Panc1 (cell line): ENCODE measurements at regions of chr10 and their contacts with region 1.

Region 1: GRCh38 chr10:103040418-103040817 is 122.3 kb downstream of the CNNM2 start:
- DNase-seq: no peak
- ATAC-seq: peak; percentile 46; the same call in 1 of the 2 replicates
- H3K4me3 ChIP-seq: no peak overlapping the region
- H3K27ac ChIP-seq: no peak overlapping the region
- H3K4me1 ChIP-seq: no peaks in the 10 kb centered on the region
- H3K27me3 ChIP-seq: no peaks in the 10 kb centered on the region
- CTCF ChIP-seq: no peak

Region 2: DNA sequence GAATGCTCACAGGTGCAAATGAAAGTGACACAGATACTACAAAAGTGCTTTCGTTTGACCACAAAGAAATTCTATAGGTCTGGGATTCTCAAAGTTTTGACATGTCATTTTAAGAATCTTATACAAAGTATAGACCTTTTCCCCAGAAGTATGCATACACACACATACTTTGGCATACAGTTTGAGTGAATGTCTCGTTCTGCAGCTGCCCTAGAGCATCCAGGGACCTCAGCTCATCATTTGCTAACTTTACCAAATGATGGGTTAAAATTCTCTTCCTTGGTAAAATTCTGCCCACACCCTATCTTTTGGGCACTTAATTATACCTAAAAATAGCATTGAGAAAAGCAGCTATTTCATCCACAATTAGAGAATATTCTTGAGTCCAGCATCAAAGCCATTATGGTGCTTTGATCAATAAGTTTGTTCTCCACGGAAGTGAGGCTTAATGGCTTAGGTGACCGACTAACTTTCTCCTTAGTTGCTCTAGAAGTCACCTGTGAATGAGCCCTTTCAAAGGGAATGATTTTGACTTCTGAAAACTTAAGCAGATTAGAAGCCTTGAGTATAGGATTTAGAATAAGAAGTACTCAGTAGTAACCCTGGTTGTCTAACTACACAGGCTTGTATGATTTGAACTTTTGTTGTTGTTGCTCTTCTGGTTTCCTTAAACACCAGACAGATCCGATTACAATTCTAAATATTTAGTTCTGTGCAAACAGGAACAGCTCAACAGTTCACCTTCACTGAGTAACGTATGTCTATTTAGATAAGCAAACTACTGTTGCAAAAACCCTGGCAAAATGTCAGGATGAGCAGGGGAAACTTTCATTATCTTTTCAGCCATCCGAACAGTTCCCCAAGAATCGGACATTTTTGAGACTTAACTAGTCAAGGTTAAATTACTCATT is 51.8 kb before region 1 on chr10:
- CTCF ChIA-PET with region 1: no interaction called
- POLR2A ChIA-PET with region 1: no interaction called
- in situ Hi-C with region 1: no loop called
- intact Hi-C with region 1: no loop called
- DNase-seq: no peak
- ATAC-seq: peak; percentile 58; the same call in 1 of the 2 replicates
- H3K4me3 ChIP-seq: no peak overlapping the region
- H3K27ac ChIP-seq: peak overlapping the region; percentile 32; the same call in 1 of the 2 replicates
- H3K4me1 ChIP-seq: peaks cover 9% of the 10 kb centered on the region
- H3K27me3 ChIP-seq: no peaks in the 10 kb centered on the region
- CTCF ChIP-seq: no peak

Region 3: GRCh38 chr10:103013416-103013815 is 27.0 kb before region 1 on chr10:
- CTCF ChIA-PET with region 1: no interaction called
- POLR2A ChIA-PET with region 1: interaction called, 20 read pairs
- in situ Hi-C with region 1: no loop called
- intact Hi-C with region 1: no loop called
- DNase-seq: no peak
- ATAC-seq: no peak
- H3K4me3 ChIP-seq: no peak overlapping the region
- H3K27ac ChIP-seq: no peak overlapping the region
- H3K4me1 ChIP-seq: no peaks in the 10 kb centered on the region
- H3K27me3 ChIP-seq: no peaks in the 10 kb centered on the region
- CTCF ChIP-seq: no peak